ENCODE measurements at regions of chr4 and their contacts with region 1.

Region 1: DNA sequence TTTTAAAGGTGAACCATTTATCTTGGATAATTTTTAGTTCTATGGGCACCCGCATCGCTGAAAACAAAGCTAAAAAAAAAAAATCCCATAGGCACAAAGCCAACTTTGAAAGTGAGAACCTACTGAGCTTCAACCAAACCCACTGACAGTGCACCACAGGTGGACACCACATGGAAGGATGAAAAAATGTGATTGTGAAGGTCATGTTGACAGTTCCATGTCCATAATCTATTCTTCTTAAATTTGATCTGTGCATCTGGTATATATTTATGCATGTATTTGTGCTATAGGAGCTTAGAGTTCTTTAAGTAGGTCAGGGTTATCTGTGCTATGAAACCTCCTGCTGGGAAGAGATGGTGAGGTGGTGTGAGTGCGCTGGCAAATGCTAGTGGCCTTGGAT is 374.3 kb downstream of the SPRY1 start:
- DNase-seq: no peak
- ATAC-seq: no peak
- H3K4me3 ChIP-seq: no peak overlapping the region
- H3K27ac ChIP-seq: no peak overlapping the region
- H3K4me1 ChIP-seq: no peaks in the 10 kb centered on the region
- H3K27me3 ChIP-seq: no peaks in the 10 kb centered on the region

Region 2: GRCh38 chr4:121776610-121777401 is 1994.1 kb before region 1 on chr4:
- intact Hi-C with region 1: no loop called
- DNase-seq: no peak
- ATAC-seq: no peak
- H3K4me3 ChIP-seq: no peak overlapping the region
- H3K27ac ChIP-seq: no peak overlapping the region
- H3K4me1 ChIP-seq: peaks cover 2% of the 10 kb centered on the region
- H3K27me3 ChIP-seq: no peaks in the 10 kb centered on the region

Region 3: DNA sequence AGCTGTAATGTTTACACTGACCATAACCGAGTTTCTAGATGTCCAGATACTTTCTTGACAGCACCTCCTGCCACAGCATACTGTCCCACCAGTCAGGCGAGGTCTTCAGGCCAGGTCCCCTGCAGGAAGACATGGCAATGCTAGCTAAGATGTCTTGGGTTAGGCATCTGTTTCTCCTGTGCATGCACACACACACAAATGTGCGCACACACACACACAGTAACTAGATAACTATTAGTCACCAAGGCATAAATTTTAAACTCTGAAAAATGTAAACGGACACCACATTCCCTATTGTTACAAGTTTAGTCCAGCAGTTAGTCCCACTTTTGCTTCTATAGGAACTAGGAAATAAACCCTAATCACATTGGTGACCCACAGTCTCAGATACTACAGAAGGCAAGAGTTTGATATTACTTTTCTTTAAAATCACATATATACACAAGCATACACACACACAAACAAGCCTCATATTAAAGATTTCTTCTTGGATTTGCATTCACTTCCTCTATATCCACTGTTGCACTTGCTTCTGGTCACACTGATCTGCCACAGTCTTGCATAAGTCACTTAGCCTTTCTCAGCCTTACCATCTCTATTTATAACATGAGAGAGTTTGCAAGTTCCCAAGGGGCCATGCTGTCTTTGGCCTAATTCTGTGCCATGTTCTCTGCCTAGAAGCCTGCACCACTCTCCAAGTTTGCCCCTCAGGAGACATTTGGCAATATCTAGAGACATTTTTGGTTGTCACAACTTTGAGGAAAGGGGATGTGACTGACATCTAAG is 1182.2 kb before region 1 on chr4:
- intact Hi-C with region 1: no loop called
- DNase-seq: no peak
- ATAC-seq: no peak
- H3K4me3 ChIP-seq: no peak overlapping the region
- H3K27ac ChIP-seq: no peak overlapping the region
- H3K4me1 ChIP-seq: no peaks in the 10 kb centered on the region
- H3K27me3 ChIP-seq: no peaks in the 10 kb centered on the region

Region 4: DNA sequence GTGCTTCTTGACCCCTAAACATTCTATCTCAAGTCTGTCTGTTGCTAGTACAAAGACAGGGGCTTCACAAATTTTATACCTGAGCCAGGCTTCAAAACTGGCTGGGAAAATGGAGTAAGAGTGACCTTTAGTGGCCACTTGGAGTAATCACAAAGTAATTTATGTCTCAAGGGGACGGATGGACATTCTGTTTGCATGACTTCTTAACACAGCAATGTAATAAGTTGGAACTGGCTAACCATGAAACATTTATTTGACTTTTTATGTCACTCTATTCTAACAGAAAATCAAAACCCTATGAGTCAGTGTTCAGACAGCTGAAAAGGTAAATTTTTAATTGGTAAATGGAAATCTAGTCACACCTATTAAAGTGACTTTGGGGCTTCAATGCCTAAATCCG is 341.0 kb after region 1 on chr4:
- intact Hi-C with region 1: loop called in 3 of 4 experiments (anchors 5 to 10 kb)
- DNase-seq: no peak
- ATAC-seq: peak; percentile 84 to 86
- H3K4me3 ChIP-seq: no peak overlapping the region
- H3K27ac ChIP-seq: no peak overlapping the region
- H3K4me1 ChIP-seq: no peaks in the 10 kb centered on the region
- H3K27me3 ChIP-seq: no peaks in the 10 kb centered on the region

Measured in right cardiac atrium (tissue), 5 donors.